Psoas muscle (tissue), 8 donors: ENCODE measurements at regions of chr10 and their contacts with region 1.

Region 1: GRCh38 chr10:110871298-110872084 is at the start of gene PDCD4:
- DNase-seq: peak; percentile 99 to 100
- ATAC-seq: peak; percentile 97 to 98 (median 98)
- H3K4me3 ChIP-seq: peak within 1 kb of the TSS; percentile 96
- H3K27ac ChIP-seq: peak within 1 kb of the TSS; percentile 96
- H3K4me1 ChIP-seq: peaks cover 22% of the 10 kb centered on the region
- H3K27me3 ChIP-seq: no peaks in the 10 kb centered on the region
- CTCF ChIP-seq: no peak
- total RNA-seq, gene PDCD4: 11.3 to 19.7 (median 15.8) TPM

Region 2: DNA sequence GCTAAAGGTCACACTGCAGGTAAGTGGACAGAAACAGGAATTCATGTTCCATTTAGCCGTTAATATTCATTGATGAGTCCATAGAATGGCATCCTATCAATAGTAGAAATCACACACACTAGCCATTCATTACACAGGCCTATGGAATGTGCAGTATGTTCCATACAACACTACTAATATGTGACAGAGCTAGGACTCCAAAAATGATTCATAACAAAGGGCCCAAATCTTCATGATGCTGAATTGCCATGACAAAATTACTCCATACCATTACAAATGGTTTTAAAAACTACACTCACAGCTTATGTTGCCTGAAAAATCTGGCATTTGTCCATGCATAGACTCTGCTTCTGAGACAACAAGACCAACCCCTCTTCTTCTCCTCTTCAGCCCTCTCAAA is 1497.3 kb before region 1 on chr10:
- intact Hi-C with region 1: no loop called
- DNase-seq: no peak
- ATAC-seq: no peak
- H3K4me3 ChIP-seq: no peak overlapping the region
- H3K27ac ChIP-seq: no peak overlapping the region
- H3K4me1 ChIP-seq: no peaks in the 10 kb centered on the region
- H3K27me3 ChIP-seq: no peaks in the 10 kb centered on the region
- CTCF ChIP-seq: no peak

Region 3: GRCh38 chr10:110460111-110460809 is 411.2 kb before region 1 on chr10:
- intact Hi-C with region 1: no loop called
- DNase-seq: peak; percentile 25 to 59
- ATAC-seq: peak; percentile 44 to 75 (median 51)
- H3K4me3 ChIP-seq: no peak overlapping the region
- H3K27ac ChIP-seq: no peak overlapping the region
- H3K4me1 ChIP-seq: no peaks in the 10 kb centered on the region
- H3K27me3 ChIP-seq: no peaks in the 10 kb centered on the region
- CTCF ChIP-seq: no peak

Region 4: GRCh38 chr10:110803830-110804338 is 67.6 kb before region 1 on chr10:
- intact Hi-C with region 1: loop called in 1 of 2 experiments (anchors 5 kb)
- DNase-seq: peak; percentile 27 to 65
- ATAC-seq: peak; percentile 45 to 73 (median 70)
- H3K4me3 ChIP-seq: no peak overlapping the region
- H3K27ac ChIP-seq: no peak overlapping the region
- H3K4me1 ChIP-seq: peaks cover 16% of the 10 kb centered on the region
- H3K27me3 ChIP-seq: no peaks in the 10 kb centered on the region
- CTCF ChIP-seq: peak; percentile 51

Region 5: GRCh38 chr10:110820321-110820814 is 51.1 kb before region 1 on chr10:
- intact Hi-C with region 1: loop called (anchors 5 kb)
- DNase-seq: peak; percentile 40 to 81
- ATAC-seq: peak; percentile 79 to 85 (median 82)
- H3K4me3 ChIP-seq: no peak overlapping the region
- H3K27ac ChIP-seq: peak overlapping the region; percentile 82
- H3K4me1 ChIP-seq: peaks cover 71% of the 10 kb centered on the region
- H3K27me3 ChIP-seq: no peaks in the 10 kb centered on the region
- CTCF ChIP-seq: no peak

Region 6: DNA sequence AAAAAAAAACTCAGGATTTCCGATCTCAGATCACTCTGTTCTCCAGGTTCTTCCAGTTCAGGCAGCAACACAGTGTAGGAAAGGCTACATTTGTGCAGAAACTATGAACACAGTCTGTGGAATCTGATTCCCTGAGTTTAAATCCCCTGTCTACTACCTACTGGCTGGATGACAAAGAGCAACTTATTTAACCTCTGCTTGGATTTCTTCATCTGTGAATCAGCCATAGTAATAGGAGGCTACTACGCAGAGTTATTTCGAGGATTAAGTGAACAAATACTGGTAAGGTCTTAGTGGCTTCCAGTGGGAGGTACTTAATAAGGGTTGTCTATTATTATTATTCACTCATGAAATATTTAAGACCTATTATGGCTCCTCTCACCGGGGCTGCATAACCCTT is 44.1 kb before region 1 on chr10:
- intact Hi-C with region 1: loop called (anchors 5 kb)
- DNase-seq: no peak
- ATAC-seq: peak; percentile 88 to 91 (median 90)
- H3K4me3 ChIP-seq: no peak overlapping the region
- H3K27ac ChIP-seq: peak overlapping the region; percentile 64
- H3K4me1 ChIP-seq: peaks cover 41% of the 10 kb centered on the region
- H3K27me3 ChIP-seq: no peaks in the 10 kb centered on the region
- CTCF ChIP-seq: no peak

Region 7: GRCh38 chr10:110918643-110919363 is 47.3 kb after region 1 on chr10 and contains the start of gene BBIP1:
- intact Hi-C with region 1: loop called in 1 of 2 experiments (anchors 1 kb)
- DNase-seq: no peak
- ATAC-seq: peak; percentile 92 to 96 (median 93)
- H3K4me3 ChIP-seq: peak within 1 kb of the TSS; percentile 85
- H3K27ac ChIP-seq: peak within 1 kb of the TSS; percentile 97
- H3K4me1 ChIP-seq: peaks cover 44% of the 10 kb centered on the region
- H3K27me3 ChIP-seq: no peaks in the 10 kb centered on the region
- CTCF ChIP-seq: no peak
- total RNA-seq, gene BBIP1: 14.8 to 22.3 (median 15.7) TPM